ENCODE measurements at regions of chr11 and their contacts with region 1.

Region 1: DNA sequence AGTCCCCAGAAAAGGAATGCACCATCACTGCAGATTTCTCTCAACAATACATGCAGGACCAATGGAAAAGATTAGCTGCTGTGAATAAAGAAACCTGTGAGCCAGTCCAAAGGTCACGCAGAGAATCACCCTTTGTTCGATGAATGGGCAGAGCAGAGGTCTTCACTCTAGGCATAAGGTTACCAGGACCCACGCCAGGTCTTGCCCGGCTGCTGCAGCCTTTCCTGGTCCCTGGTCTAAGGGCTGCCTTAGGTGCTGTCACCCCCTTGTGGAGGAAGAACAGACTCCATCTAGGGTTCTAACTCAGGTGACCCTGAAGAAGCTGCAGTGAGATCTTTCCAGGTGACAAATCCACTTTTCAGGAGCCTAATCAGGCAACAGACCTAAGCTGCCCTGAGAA is 29.0 kb upstream of the NAP1L4 start:
- DNase-seq: peak in 5 of 10 donors; percentile 38 to 74 (median 48)
- H3K4me3 ChIP-seq: no peak overlapping the region
- H3K27ac ChIP-seq: peak overlapping the region in 22 of 59 donors; percentile 1 to 73 (median 33)
- H3K27me3 ChIP-seq: no peaks in the 10 kb centered on the region
- CTCF ChIP-seq: peak in 54 of 56 donors; percentile 38 to 88 (median 71)

Region 2: DNA sequence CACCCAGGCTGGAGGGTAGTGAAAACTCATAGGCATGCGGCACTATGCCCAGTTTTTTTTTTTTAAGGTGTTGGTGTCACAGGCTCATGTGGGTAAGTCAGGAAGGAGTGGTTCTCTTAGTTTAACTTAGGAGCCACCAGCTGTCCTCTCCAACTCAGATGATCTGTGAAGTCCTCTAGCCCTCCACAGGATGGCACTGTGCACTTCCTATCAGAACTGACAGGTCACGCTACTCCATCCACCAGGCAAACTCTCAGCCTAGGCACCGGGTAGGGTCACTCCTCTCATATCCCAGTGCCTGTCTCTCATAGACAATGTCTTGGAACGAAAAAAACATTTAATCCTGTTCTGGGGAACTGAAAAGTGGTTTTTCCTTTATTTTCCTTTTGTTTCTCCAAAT is 45.5 kb before region 1 on chr11:
- intact Hi-C with region 1: loop called (anchors 1 to 5 kb)
- DNase-seq: peak in 6 of 10 donors; percentile 14 to 59 (median 54)
- H3K4me3 ChIP-seq: no peak overlapping the region
- H3K27ac ChIP-seq: peak overlapping the region in 15 of 59 donors; percentile 0 to 57 (median 27)
- H3K27me3 ChIP-seq: no peaks in the 10 kb centered on the region
- CTCF ChIP-seq: peak in 55 of 56 donors; percentile 13 to 84 (median 66)

Measured in dorsolateral prefrontal cortex (tissue), 120 donors.